A549 (cell line): ENCODE measurements at regions of chr7 and their contacts with region 1.

Region 1: DNA sequence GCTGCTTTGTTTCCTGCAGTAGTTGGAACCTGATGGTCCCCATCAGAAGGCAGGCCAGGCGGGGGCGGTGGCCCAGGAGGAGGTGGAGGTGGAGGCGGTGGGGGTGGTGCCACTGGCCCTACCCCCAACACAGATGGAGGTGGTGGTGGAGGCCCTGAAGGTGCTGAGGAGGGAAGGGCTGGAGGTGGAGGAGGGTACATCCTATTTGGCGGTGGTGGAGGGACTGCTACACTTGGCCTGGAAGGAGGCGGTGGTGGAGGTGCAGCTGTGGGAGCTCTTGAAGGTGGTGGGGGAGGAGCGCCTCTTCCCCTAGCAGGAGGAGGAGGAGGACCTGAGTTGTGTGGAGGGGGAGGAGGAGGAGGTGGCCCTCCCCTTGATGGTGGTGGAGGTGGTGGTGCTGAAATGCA is 36.8 kb downstream of the LMOD2 start:
- DNase-seq: no peak
- ATAC-seq: no peak
- H3K4me3 ChIP-seq: no peak overlapping the region
- H3K27ac ChIP-seq: no peak overlapping the region
- H3K4me1 ChIP-seq: no peaks in the 10 kb centered on the region
- CTCF ChIP-seq: no peak
- EP300 ChIP-seq: no peak
- POLR2A ChIP-seq: no peak
- RAD21 ChIP-seq: no peak

Region 2: GRCh38 chr7:123705211-123705901 is 12.9 kb after region 1 on chr7:
- CTCF ChIA-PET with region 1: interaction called, 13 read pairs
- POLR2A ChIA-PET with region 1: no interaction called
- DNase-seq: no peak
- ATAC-seq: no peak
- H3K4me3 ChIP-seq: no peak overlapping the region
- H3K27ac ChIP-seq: no peak overlapping the region
- H3K4me1 ChIP-seq: peaks cover 8% of the 10 kb centered on the region; the same call in 2 of the 3 replicates
- CTCF ChIP-seq: no peak
- EP300 ChIP-seq: no peak
- POLR2A ChIP-seq: no peak
- RAD21 ChIP-seq: no peak